Calu3 (cell line): ENCODE measurements at regions of chr11 and their contacts with region 1.

Region 1: GRCh38 chr11:18115360-18116127 is 9.7 kb upstream of the SAAL1 start:
- DNase-seq: peak; percentile 78
- H3K4me3 Mint-ChIP-seq: no peak overlapping the region
- H3K27ac Mint-ChIP-seq: no peak overlapping the region
- H3K4me1 Mint-ChIP-seq: peaks cover 16% of the 10 kb centered on the region
- H3K27me3 Mint-ChIP-seq: peaks cover 35% of the 10 kb centered on the region
- CTCF ChIP-seq: peak; percentile 80

Region 2: DNA sequence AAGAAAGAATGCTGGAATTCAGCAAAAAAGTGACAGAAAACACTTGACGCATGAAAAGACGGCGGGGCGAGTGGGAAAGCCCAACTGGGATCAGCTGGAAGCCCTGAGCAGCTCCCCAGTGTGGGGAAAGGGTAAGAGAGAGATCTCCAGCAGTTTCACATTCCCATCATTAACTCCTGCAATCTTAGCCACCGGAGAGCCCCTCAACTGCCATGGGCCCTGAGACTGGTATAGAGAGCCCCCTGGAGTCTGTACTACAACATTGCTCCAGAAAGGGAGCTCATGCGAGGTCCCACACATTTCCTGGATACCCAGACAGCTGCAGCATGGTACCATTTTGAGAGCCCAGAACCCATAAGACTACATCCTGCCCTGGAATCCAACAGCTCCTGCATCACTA is 88.2 kb after region 1 on chr11:
- CTCF ChIA-PET with region 1: interaction called, 25 read pairs
- intact Hi-C with region 1: loop called (anchors 1 kb)
- DNase-seq: peak; percentile 4
- H3K4me3 Mint-ChIP-seq: no peak overlapping the region
- H3K27ac Mint-ChIP-seq: no peak overlapping the region
- H3K4me1 Mint-ChIP-seq: no peaks in the 10 kb centered on the region
- H3K27me3 Mint-ChIP-seq: peaks cover 13% of the 10 kb centered on the region
- CTCF ChIP-seq: peak; percentile 44

Region 3: GRCh38 chr11:18243783-18244362 is 128.3 kb after region 1 on chr11:
- CTCF ChIA-PET with region 1: interaction called, 10 read pairs
- intact Hi-C with region 1: no loop called
- DNase-seq: peak; percentile 76
- H3K4me3 Mint-ChIP-seq: no peak overlapping the region
- H3K27ac Mint-ChIP-seq: no peak overlapping the region
- H3K4me1 Mint-ChIP-seq: peaks cover 21% of the 10 kb centered on the region
- H3K27me3 Mint-ChIP-seq: no peaks in the 10 kb centered on the region
- CTCF ChIP-seq: peak; percentile 83